Left ventricle myocardium inferior (tissue), 1 donor: ENCODE measurements at regions of chr2 and their contacts with region 1.

Region 1: GRCh38 chr2:44981136-44982108 is 27.8 kb downstream of the SIX2 start:
- DNase-seq: peak; percentile 72
- H3K4me3 ChIP-seq: no peak overlapping the region
- H3K27ac ChIP-seq: no peak overlapping the region
- H3K4me1 ChIP-seq: no peaks in the 10 kb centered on the region
- H3K27me3 ChIP-seq: peaks cover 85% of the 10 kb centered on the region
- CTCF ChIP-seq: peak; percentile 88

Region 2: GRCh38 chr2:44928483-44929158 is 52.8 kb before region 1 on chr2:
- intact Hi-C with region 1: no loop called
- DNase-seq: no peak
- H3K4me3 ChIP-seq: peak overlapping the region; percentile 56
- H3K27ac ChIP-seq: no peak overlapping the region
- H3K4me1 ChIP-seq: peaks cover 32% of the 10 kb centered on the region
- H3K27me3 ChIP-seq: peaks cover 100% of the 10 kb centered on the region
- CTCF ChIP-seq: no peak

Region 3: GRCh38 chr2:45128580-45128997 is 147.2 kb after region 1 on chr2:
- intact Hi-C with region 1: no loop called
- DNase-seq: peak; percentile 46
- H3K4me3 ChIP-seq: no peak overlapping the region
- H3K27ac ChIP-seq: no peak overlapping the region
- H3K4me1 ChIP-seq: no peaks in the 10 kb centered on the region
- H3K27me3 ChIP-seq: peaks cover 10% of the 10 kb centered on the region
- CTCF ChIP-seq: no peak

Region 4: DNA sequence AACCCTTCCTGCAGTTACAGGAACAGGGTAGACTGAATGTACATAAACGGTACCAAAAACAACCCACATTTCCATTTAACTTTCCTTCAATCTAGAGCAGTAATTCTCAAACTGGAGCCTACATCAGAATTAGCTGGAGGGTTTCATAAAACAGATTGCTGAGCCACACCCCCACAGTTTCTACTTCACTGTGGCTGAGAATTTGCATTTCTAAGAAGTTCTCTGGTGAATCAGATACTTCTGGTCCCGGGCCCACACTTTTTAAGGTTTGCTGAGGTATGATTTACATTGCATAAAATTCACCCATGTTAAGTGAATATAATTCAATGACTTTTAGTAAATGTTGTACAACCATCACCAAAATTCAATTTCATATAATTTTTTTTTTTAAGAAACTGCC is 515.9 kb after region 1 on chr2:
- intact Hi-C with region 1: loop called (anchors 5 kb)
- DNase-seq: no peak
- H3K4me3 ChIP-seq: no peak overlapping the region
- H3K27ac ChIP-seq: no peak overlapping the region
- H3K4me1 ChIP-seq: no peaks in the 10 kb centered on the region
- H3K27me3 ChIP-seq: no peaks in the 10 kb centered on the region
- CTCF ChIP-seq: no peak